ENCODE measurements at regions of chr1 and their contacts with region 1.

Region 1: DNA sequence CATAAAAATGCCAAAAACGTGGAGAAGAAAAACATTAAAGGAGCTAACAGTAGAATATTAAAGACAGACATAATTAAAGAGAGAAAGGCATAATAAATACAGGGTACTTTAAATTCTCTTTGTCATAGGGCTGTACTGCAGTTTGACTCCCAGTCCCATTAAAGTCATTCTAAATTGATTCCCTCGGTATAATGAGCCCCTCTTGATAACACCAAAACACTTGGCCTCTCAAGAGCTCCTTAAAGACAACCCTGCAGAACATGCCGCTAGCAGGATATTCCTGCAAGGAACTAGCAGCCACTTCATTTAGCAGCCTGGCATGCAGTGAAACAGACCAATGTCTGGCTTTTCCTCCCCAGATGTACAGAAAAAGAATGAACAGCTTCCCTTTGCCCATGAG is 273.8 kb upstream of the ESRRG start:
- DNase-seq: no peak
- ATAC-seq: no peak
- H3K4me3 ChIP-seq: no peak overlapping the region
- H3K27ac ChIP-seq: no peak overlapping the region
- H3K4me1 ChIP-seq: no peaks in the 10 kb centered on the region
- H3K27me3 ChIP-seq: no peaks in the 10 kb centered on the region

Region 2: GRCh38 chr1:217029281-217030157 is 32.5 kb after region 1 on chr1:
- intact Hi-C with region 1: no loop called
- DNase-seq: peak in 1 of 2 donors; percentile 43
- ATAC-seq: peak; percentile 65
- H3K4me3 ChIP-seq: no peak overlapping the region
- H3K27ac ChIP-seq: peak overlapping the region; percentile 93 to 95
- H3K4me1 ChIP-seq: peaks cover 2 to 7% of the 10 kb centered on the region in 2 donors
- H3K27me3 ChIP-seq: no peaks in the 10 kb centered on the region

Region 3: DNA sequence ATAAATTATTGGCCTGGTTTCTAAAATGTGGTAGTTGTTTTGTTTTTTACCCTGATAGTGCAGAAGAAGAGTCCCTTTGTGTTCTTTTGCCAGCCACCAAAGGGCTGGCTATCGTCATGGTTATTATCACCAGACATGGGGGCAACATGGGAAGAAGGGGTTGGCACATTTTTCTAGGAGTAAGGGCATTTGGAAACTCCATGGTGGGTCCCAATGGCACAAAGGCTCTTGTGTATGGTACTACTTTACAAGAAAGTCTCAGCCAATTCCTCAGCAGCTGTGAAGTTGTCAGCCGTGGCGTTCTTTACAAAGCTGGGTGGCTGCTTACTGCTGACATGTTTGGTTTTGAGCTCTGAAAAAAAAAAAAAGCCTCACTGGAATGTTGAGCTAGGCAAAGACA is 56.6 kb after region 1 on chr1:
- intact Hi-C with region 1: loop called in 1 of 2 experiments (anchors 2 kb)
- DNase-seq: no peak
- ATAC-seq: no peak
- H3K4me3 ChIP-seq: no peak overlapping the region
- H3K27ac ChIP-seq: no peak overlapping the region
- H3K4me1 ChIP-seq: no peaks in the 10 kb centered on the region
- H3K27me3 ChIP-seq: no peaks in the 10 kb centered on the region

Region 4: DNA sequence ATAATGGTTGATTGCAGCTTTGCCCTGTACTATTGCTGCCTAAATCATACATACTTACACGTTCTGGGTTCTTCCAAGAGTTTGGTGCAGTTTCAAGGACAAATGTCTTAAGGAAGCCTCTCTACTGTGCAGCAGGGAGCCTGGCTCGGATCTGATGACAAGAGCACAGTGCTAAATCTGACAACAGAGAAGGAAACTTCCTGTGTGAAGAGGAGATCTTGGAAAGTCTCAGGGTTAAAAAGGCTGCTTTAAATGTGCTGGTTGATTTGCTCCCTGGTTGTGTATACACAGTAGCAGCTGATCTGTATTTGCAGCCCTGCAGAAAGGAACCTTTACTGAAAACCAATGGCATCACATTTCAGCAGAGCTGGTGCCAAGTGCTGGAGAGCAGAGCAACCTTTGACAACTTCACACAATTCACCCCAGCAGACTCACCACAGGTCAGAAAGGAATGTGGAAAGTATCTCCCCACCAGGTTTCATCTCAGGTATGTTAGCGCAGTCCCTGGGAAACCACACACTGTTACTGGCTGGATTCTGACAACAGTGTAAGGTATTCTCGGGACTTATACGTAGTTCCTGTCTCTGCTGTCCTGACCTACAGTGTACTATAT is 81.1 kb after region 1 on chr1:
- intact Hi-C with region 1: no loop called
- DNase-seq: no peak
- ATAC-seq: peak; percentile 45
- H3K4me3 ChIP-seq: no peak overlapping the region
- H3K27ac ChIP-seq: no peak overlapping the region
- H3K4me1 ChIP-seq: no peaks in the 10 kb centered on the region
- H3K27me3 ChIP-seq: no peaks in the 10 kb centered on the region